ENCODE measurements at regions of chr4 and their contacts with region 1.

Region 1: DNA sequence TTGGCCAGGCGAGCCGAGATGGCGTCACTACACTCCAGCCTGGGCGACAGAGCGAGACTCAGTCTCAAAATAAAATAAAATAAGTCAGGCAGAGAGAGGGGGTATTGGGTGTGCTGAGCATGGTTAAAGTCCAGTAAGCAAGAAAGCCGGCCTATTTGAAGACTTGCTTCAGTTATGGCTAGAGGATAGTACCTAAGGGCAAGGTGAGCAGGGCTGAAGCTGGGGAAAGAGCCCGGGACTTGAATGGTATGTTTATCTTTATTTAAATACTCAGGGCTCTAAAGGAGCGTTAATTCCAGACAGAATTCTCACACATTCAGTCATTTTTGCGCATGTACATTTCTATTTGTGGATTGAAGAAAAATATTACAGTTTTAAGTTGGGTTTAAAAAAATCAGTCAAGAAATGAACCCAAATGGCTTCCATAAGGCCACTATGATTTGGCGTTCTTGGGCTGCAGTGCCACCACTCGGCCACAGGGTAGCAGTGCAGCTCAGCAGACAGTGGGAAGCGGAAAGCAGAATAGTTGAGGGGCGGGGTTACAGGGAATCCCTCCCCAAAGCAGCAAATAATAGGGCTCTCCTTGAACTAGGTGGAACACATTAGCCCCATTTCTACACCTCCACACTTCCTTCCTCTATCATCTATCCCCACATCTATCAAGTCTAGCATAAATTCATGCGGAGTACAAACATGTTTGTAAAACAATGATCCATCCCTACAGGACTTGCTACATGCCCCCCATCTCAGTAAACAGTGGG is 37.2 kb upstream of the SH3D19 start:
- DNase-seq: peak; percentile 80 to 94 (median 83)
- H3K4me3 ChIP-seq: no peak overlapping the region
- H3K27ac ChIP-seq: no peak overlapping the region
- H3K4me1 ChIP-seq: no peaks in the 10 kb centered on the region
- H3K27me3 ChIP-seq: no peaks in the 10 kb centered on the region
- CTCF ChIP-seq: peak; percentile 93 to 98 (median 97)
- POLR2A ChIP-seq: no peak

Region 2: DNA sequence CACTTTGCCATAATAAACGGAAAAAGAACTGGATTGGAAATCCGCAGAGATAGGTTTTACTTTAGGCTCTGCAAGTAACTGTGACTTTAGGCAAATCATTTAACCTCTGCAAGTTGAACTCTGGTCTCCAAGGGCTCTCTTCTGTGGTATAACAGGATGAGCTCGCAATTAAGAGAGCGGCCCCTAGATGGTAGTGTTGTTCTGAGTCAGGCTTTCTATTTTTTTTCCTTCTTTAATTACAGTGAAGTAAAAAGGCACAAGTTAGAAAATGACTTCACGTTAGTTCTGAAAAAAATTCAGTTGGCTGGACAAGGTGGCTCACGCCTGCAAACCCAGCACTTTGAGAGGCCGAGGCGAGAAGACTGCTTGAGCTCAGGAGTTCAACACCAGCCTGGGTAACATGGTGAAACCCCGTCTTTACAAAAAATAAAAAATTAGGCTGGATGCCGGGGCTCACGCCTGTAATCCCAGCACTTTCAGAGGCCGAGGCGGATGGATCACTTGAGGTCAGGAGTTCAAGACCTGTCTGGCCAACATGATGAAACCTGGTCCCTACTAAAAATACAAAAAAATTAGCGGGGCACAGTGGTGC is 245.1 kb before region 1 on chr4:
- intact Hi-C with region 1: loop called in 1 of 2 experiments (anchors 5 kb)
- DNase-seq: peak; percentile 63 to 88 (median 69)
- H3K4me3 ChIP-seq: no peak overlapping the region
- H3K27ac ChIP-seq: no peak overlapping the region
- H3K4me1 ChIP-seq: peaks cover 0 to 5% of the 10 kb centered on the region in 2 donors
- H3K27me3 ChIP-seq: no peaks in the 10 kb centered on the region
- CTCF ChIP-seq: peak; percentile 56 to 81 (median 74)
- POLR2A ChIP-seq: no peak

Region 3: DNA sequence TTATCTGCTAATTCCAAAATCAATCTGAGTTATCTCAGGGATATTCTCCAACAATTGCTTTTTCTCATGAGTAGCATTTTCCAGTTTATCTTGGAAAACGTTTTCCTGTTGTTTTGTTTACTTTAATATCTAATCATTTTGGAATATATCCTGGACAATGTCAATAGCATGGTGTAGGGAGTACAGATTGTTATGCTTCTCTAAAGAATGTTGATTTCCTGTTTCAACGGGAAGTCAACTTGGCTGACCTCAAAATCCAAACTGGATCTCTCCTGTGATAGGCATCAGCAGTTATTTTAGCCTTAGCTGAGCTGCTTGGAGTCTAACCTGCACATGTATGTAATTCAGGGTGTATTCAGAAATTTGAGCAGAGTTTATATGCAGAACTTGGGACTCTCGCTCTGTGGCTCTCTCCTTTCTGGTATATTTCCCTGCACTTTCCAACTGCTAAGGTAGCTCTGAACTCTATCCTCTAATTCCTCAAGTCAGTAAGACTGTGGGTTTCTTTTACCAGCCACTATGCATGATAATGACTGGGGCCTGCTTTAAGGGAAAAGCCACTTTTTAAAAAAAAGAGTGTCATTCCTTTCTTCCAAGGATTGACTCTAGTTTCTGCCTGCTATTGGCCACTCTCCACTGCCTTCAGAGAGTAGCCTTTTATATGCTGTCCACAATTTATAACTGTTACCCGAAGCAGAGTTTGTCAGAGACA is 77.9 kb before region 1 on chr4:
- intact Hi-C with region 1: loop called in 1 of 2 experiments (anchors 10 kb)
- DNase-seq: no peak
- H3K4me3 ChIP-seq: no peak overlapping the region
- H3K27ac ChIP-seq: no peak overlapping the region
- H3K4me1 ChIP-seq: no peaks in the 10 kb centered on the region
- H3K27me3 ChIP-seq: no peaks in the 10 kb centered on the region
- CTCF ChIP-seq: no peak
- POLR2A ChIP-seq: no peak

Region 4: GRCh38 chr4:151604238-151604637 is 241.7 kb after region 1 on chr4:
- intact Hi-C with region 1: loop called in 1 of 2 experiments (anchors 10 kb)
- DNase-seq: no peak
- H3K4me3 ChIP-seq: no peak overlapping the region
- H3K27ac ChIP-seq: no peak overlapping the region
- H3K4me1 ChIP-seq: no peaks in the 10 kb centered on the region
- H3K27me3 ChIP-seq: no peaks in the 10 kb centered on the region
- CTCF ChIP-seq: peak; percentile 33 to 55 (median 48)
- POLR2A ChIP-seq: no peak

Region 5: DNA sequence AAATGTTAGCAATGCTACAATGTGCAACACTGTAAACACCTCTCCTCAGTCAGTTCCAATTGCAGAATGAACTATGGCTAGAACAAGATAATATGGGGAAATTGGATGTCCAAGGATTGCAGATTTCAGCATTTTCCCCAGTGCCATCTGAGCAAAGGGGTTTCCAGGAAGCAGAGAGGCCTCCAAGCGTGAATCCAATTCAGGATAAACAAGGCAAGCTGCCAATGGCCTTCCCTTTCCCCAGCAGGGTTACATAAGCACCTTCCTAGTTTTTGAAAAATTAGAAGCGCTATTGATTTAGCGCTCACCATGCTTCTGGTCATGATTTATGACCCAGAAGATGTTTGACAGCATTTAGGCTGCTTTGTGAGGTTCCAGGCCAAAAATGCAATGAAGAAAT is 621.3 kb after region 1 on chr4:
- intact Hi-C with region 1: no loop called
- DNase-seq: peak in 3 of 7 donors; percentile 20 to 55 (median 31)
- H3K4me3 ChIP-seq: no peak overlapping the region
- H3K27ac ChIP-seq: no peak overlapping the region
- H3K4me1 ChIP-seq: no peaks in the 10 kb centered on the region
- H3K27me3 ChIP-seq: no peaks in the 10 kb centered on the region
- CTCF ChIP-seq: no peak
- POLR2A ChIP-seq: no peak